ENCODE measurements at regions of chr6 and their contacts with region 1.

Region 1: GRCh38 chr6:156686995-156687788 is 90.0 kb upstream of the ARID1B start:
- DNase-seq: peak; percentile 91
- ATAC-seq: peak; percentile 83
- H3K4me3 ChIP-seq: peak overlapping the region; percentile 80 to 99 (median 84)
- H3K4me3 Mint-ChIP-seq: peak overlapping the region; percentile 88
- H3K27ac ChIP-seq: peak overlapping the region; percentile 92 to 94
- H3K27ac Mint-ChIP-seq: peak overlapping the region; percentile 98
- H3K4me1 ChIP-seq: peaks cover 50% of the 10 kb centered on the region in 2 donors
- H3K4me1 Mint-ChIP-seq: peaks cover 59% of the 10 kb centered on the region
- H3K27me3 ChIP-seq: no peaks in the 10 kb centered on the region
- H3K27me3 Mint-ChIP-seq: no peaks in the 10 kb centered on the region
- CTCF ChIP-seq: no peak

Region 2: GRCh38 chr6:156564127-156564806 is 122.9 kb before region 1 on chr6:
- CTCF ChIA-PET with region 1: interaction called, 34 read pairs
- POLR2A ChIA-PET with region 1: no interaction called
- intact Hi-C with region 1: loop called (anchors 1 kb)
- DNase-seq: peak; percentile 86
- ATAC-seq: peak; percentile 100
- H3K4me3 ChIP-seq: no peak overlapping the region
- H3K4me3 Mint-ChIP-seq: no peak overlapping the region
- H3K27ac ChIP-seq: no peak overlapping the region
- H3K27ac Mint-ChIP-seq: no peak overlapping the region
- H3K4me1 ChIP-seq: peaks cover 2 to 12% of the 10 kb centered on the region in 2 donors
- H3K4me1 Mint-ChIP-seq: peaks cover 16% of the 10 kb centered on the region
- H3K27me3 ChIP-seq: no peaks in the 10 kb centered on the region
- H3K27me3 Mint-ChIP-seq: peaks cover 18% of the 10 kb centered on the region
- CTCF ChIP-seq: peak; percentile 98

Region 3: GRCh38 chr6:156698239-156699016 is 11.2 kb after region 1 on chr6:
- CTCF ChIA-PET with region 1: interaction called, 5 read pairs
- POLR2A ChIA-PET with region 1: interaction called, 3 read pairs
- intact Hi-C with region 1: loop called (anchors 1 kb)
- DNase-seq: peak; percentile 86
- ATAC-seq: peak; percentile 84
- H3K4me3 ChIP-seq: peak overlapping the region in 1 of 5 experiments; percentile 18
- H3K4me3 Mint-ChIP-seq: peak overlapping the region; percentile 51
- H3K27ac ChIP-seq: peak overlapping the region; percentile 67 to 89
- H3K27ac Mint-ChIP-seq: peak overlapping the region; percentile 88
- H3K4me1 ChIP-seq: peaks cover 68 to 73% of the 10 kb centered on the region in 2 donors
- H3K4me1 Mint-ChIP-seq: peaks cover 64% of the 10 kb centered on the region
- H3K27me3 ChIP-seq: no peaks in the 10 kb centered on the region
- H3K27me3 Mint-ChIP-seq: no peaks in the 10 kb centered on the region
- CTCF ChIP-seq: no peak

Region 4: DNA sequence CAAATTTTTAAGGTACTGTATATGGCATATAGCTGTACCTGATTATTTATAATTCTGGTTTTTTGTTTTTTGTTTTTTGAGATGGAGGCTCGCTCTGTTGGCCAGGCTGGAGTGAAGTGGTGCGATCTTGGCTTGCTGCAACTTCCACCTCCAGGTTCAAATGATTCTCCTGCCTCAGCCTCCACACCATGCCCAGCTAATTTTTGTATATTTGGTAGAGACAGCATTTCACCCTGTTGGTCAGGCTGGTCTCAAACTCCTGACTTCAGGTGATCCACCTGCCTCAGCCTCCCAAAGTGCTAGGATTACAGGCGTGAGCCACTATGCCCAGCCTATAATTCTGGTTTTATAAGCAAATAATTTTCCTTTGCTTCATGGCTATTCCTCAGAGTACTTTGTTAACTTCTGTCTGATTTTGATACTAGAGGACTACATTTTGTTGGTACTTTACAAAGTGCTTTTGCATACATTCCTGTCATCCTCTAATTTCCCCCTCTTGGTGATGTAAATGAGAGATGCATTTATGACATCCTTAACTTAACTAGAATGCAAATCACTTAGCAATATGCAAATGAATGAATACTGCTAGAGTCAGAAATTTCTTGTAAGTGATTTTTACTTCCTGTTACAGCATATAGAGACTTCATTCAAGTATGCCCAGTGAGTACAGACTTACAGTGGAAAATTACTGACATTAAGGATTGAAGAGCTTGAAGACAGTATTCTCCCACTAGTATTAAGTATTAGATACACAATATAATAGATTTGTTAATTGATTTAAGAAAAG is 54.3 kb after region 1 on chr6:
- CTCF ChIA-PET with region 1: no interaction called
- POLR2A ChIA-PET with region 1: no interaction called
- intact Hi-C with region 1: no loop called
- DNase-seq: peak; percentile 43
- ATAC-seq: peak; percentile 33
- H3K4me3 ChIP-seq: no peak overlapping the region
- H3K4me3 Mint-ChIP-seq: no peak overlapping the region
- H3K27ac ChIP-seq: no peak overlapping the region
- H3K27ac Mint-ChIP-seq: no peak overlapping the region
- H3K4me1 ChIP-seq: peaks cover 8 to 9% of the 10 kb centered on the region in 2 donors
- H3K4me1 Mint-ChIP-seq: peaks cover 7% of the 10 kb centered on the region
- H3K27me3 ChIP-seq: no peaks in the 10 kb centered on the region
- H3K27me3 Mint-ChIP-seq: no peaks in the 10 kb centered on the region
- CTCF ChIP-seq: no peak

Region 5: DNA sequence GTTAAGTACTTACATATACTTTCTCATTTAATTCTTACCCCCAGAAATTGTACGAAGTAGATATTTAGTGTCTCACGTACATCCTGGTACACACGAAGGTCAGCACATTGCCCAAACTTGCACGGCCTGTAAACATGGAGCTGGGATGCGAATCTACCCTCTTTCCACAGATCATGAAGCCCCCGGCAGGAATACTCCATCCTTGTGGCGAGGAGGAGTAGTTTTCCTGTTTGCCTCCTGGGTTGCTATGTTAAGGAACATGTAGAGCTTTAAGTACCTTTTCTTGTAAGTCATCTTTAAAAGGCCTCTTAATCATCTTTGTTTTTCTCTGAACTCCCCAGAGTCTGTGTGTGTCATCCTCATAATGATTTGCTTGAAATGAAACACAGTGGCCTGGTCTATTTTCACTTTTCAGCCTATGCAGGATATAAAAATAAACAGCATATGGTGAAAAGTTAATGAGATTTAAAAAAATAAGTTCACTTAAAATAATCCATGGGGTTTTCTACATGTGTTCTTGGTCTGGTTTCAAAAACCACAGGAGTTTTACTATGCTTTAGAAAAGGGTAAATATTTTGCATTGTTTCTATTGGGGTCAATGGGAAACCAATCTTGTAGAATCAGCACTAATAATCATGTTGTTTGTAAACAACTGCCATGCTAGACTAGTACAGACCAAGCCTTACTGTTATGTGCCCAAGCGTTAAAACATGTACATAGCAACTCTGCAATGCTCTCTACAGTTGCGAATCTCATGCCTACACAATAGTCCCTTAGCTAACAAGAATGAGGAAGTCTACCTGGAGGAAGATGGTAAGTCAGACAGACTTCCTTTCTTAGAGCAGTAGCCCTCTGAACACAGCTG is 80.6 kb after region 1 on chr6:
- CTCF ChIA-PET with region 1: interaction called, 4 read pairs
- POLR2A ChIA-PET with region 1: interaction called, 13 read pairs
- intact Hi-C with region 1: no loop called
- DNase-seq: peak; percentile 73
- ATAC-seq: peak; percentile 92
- H3K4me3 ChIP-seq: no peak overlapping the region
- H3K4me3 Mint-ChIP-seq: peak overlapping the region; percentile 69
- H3K27ac ChIP-seq: peak overlapping the region; percentile 29 to 75
- H3K27ac Mint-ChIP-seq: peak overlapping the region; percentile 93
- H3K4me1 ChIP-seq: peaks cover 23 to 24% of the 10 kb centered on the region in 2 donors
- H3K4me1 Mint-ChIP-seq: peaks cover 22% of the 10 kb centered on the region
- H3K27me3 ChIP-seq: no peaks in the 10 kb centered on the region
- H3K27me3 Mint-ChIP-seq: no peaks in the 10 kb centered on the region
- CTCF ChIP-seq: peak; percentile 18